HepG2 (cell line): ENCODE measurements at regions of chr5 and their contacts with region 1.

Region 1: GRCh38 chr5:16759147-16759773 is 142.5 kb upstream of the RETREG1 start:
- DNase-seq: no peak
- ATAC-seq: no peak
- H3K4me3 ChIP-seq: no peak overlapping the region
- H3K27ac ChIP-seq: peak overlapping the region; percentile 60
- H3K4me1 ChIP-seq: peaks cover 32% of the 10 kb centered on the region
- H3K27me3 ChIP-seq: no peaks in the 10 kb centered on the region; a peak in 1 of 5 replicates
- CTCF ChIP-seq: no peak
- EP300 ChIP-seq: no peak
- POLR2A ChIP-seq: no peak
- RAD21 ChIP-seq: no peak

Region 2: DNA sequence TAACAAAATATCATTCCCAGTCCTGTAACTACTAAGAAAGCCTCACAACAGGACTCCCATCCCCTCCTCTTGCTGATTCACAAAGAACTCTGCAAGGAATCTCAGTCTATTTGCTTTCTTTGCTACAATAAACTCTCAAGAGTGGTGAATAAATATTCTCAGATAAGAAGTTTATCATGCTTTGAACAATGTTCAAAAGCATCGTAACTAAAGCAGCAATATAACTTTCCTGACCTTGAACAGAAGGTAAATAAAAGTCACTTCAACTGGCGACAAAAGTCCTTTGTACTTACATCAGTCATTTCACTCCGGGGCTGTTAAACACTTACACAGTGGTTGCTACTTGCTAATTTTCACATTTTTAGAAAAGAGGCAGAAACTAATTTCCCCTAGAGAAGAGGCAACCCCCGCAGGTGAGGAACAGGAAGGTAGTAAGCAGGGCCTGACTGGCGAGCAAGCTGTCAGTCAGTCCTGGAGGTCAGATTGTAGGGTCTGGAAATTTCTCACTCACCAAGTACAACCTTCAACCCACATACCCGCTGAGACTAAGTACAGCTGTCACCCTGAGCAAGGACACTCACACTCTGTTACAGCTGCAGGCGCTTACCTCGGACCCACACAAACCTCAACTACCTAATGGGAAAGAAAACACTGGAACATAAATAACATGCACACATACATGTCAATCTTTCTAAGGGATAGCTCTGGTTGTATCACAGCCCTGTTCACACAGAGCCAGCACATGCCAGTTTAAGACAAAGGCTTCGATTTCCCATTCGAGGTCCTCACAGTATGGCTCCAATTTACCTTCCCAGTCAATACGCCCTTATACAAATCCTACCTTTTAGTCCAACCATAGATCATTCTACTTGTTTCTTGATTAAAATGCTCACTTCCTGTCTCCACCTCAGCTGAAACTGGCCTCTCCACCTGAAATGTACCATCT is 37.8 kb before region 1 on chr5:
- CTCF ChIA-PET with region 1: no interaction called
- POLR2A ChIA-PET with region 1: interaction called, 7 read pairs
- in situ Hi-C with region 1: no loop called
- intact Hi-C with region 1: loop called (anchors 5 kb)
- DNase-seq: peak; percentile 89
- ATAC-seq: peak; percentile 97
- H3K4me3 ChIP-seq: peak overlapping the region in 2 of 3 experiments; percentile 37 to 41; a peak in 2 of 6 replicates
- H3K27ac ChIP-seq: peak overlapping the region; percentile 88
- H3K4me1 ChIP-seq: peaks cover 36% of the 10 kb centered on the region
- H3K27me3 ChIP-seq: no peaks in the 10 kb centered on the region
- CTCF ChIP-seq: no peak
- EP300 ChIP-seq: peak in 1 of 2 experiments; percentile 92; a peak in 2 of 4 replicates
- POLR2A ChIP-seq: 0 out of 4 replicates have a peak, but pooled peaks of 1 of the 2 experiments have one; percentile 24
- RAD21 ChIP-seq: no peak

Region 3: GRCh38 chr5:16742938-16743337 is 16.3 kb before region 1 on chr5:
- CTCF ChIA-PET with region 1: no interaction called
- POLR2A ChIA-PET with region 1: interaction called, 91 read pairs
- in situ Hi-C with region 1: no loop called
- intact Hi-C with region 1: loop called (anchors 1 kb)
- DNase-seq: peak; percentile 45
- ATAC-seq: peak; percentile 12; the same call in 1 of the 3 replicates
- H3K4me3 ChIP-seq: no peak overlapping the region
- H3K27ac ChIP-seq: peak overlapping the region; percentile 14
- H3K4me1 ChIP-seq: peaks cover 67% of the 10 kb centered on the region
- H3K27me3 ChIP-seq: no peaks in the 10 kb centered on the region; a peak in 1 of 5 replicates
- CTCF ChIP-seq: no peak
- EP300 ChIP-seq: 0 out of 4 replicates have a peak, but pooled peaks of 1 of the 2 experiments have one; percentile 21
- POLR2A ChIP-seq: no peak
- RAD21 ChIP-seq: no peak